AG04450 (cell line): ENCODE measurements at regions of chr7 and their contacts with region 1.

Region 1: GRCh38 chr7:131424219-131424822 is 96.6 kb downstream of the MKLN1 start:
- DNase-seq: peak; percentile 7
- H3K4me3 ChIP-seq: no peak overlapping the region
- H3K27ac ChIP-seq: no peak overlapping the region
- H3K27me3 ChIP-seq: no peaks in the 10 kb centered on the region
- CTCF ChIP-seq: peak; percentile 65

Region 2: DNA sequence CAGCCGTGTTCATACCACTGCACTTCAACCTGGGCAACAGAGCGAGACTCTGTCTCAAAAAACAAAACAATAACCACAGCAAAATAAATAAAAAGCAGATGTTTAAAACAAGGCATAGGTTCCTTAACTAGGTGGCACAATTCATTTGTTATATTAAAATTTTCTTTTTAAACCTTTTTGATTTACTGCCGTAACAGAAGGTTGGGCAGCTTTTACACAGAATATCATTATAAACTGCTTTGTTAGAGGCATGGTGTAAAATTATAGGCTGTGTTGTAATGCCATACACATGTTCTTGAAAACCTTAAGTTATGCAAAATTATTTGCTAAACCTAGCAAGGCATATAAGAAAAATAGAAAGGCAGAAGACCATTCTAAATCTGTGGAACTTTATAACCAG is 12.3 kb before region 1 on chr7:
- CTCF ChIA-PET with region 1: interaction called, 16 read pairs
- POLR2A ChIA-PET with region 1: no interaction called
- DNase-seq: no peak
- H3K4me3 ChIP-seq: no peak overlapping the region
- H3K27ac ChIP-seq: no peak overlapping the region
- H3K27me3 ChIP-seq: no peaks in the 10 kb centered on the region
- CTCF ChIP-seq: no peak

Region 3: DNA sequence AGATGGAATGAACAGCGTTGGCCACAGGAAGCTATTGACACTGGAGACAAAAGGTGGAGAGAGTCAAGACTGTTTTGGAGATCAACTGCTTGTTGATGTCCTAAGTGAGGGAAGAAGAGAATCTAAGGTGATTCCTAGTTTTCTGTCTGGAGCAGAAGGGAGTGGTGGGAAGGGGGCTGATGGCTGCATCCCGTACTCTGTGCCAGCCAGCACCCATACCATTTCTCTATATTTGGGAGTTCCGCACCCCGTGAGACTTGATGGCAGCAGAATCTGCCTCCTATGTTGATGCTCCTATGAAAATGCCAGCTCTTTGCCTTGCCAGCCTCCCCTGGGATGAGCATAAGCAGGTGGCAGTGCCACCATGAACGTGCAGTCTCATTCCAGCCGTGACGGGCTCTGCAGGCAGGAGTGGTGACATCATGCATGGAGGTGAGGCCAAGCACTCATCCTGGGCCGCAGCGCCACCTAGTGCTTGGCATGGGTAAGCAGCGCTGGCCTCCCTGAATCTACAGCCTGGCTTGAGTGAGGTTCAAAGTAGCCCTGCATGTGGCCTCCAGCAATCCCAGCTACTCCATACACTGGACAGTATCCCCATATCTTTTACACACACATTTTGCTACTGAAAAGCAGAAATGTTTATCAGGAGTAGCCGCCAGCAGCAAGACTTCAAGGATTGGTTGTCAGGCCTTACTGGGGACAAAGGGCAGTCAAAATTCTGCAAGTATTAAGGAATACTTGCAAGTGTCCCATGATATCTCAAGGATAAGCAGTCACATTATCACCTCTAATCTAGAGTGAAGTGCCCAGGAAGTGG is 89.1 kb after region 1 on chr7:
- CTCF ChIA-PET with region 1: no interaction called
- POLR2A ChIA-PET with region 1: no interaction called
- DNase-seq: peak; percentile 68
- H3K4me3 ChIP-seq: no peak overlapping the region
- H3K27ac ChIP-seq: no peak overlapping the region
- H3K27me3 ChIP-seq: no peaks in the 10 kb centered on the region
- CTCF ChIP-seq: peak; percentile 98